WTC11 (cell line): ENCODE measurements at regions of chr14 and their contacts with region 1.

Region 1: GRCh38 chr14:22052795-22053194 is 379.2 kb upstream of the OR4E1 start:
- DNase-seq: no peak
- ATAC-seq: peak; percentile 30; the same call in 1 of the 2 replicates
- H3K4me3 Mint-ChIP-seq: no peak overlapping the region
- H3K27ac Mint-ChIP-seq: no peak overlapping the region
- H3K4me1 Mint-ChIP-seq: peaks cover 4% of the 10 kb centered on the region
- H3K27me3 Mint-ChIP-seq: peaks cover 3% of the 10 kb centered on the region; the same call in 1 of the 2 replicates
- CTCF ChIP-seq: no peak

Region 2: GRCh38 chr14:21965042-21965441 is 87.8 kb before region 1 on chr14:
- CTCF ChIA-PET with region 1: no interaction called
- POLR2A ChIA-PET with region 1: no interaction called
- DNase-seq: no peak
- ATAC-seq: no peak
- H3K4me3 Mint-ChIP-seq: no peak overlapping the region
- H3K27ac Mint-ChIP-seq: no peak overlapping the region
- H3K4me1 Mint-ChIP-seq: no peaks in the 10 kb centered on the region
- H3K27me3 Mint-ChIP-seq: peaks cover 22% of the 10 kb centered on the region
- CTCF ChIP-seq: no peak

Region 3: DNA sequence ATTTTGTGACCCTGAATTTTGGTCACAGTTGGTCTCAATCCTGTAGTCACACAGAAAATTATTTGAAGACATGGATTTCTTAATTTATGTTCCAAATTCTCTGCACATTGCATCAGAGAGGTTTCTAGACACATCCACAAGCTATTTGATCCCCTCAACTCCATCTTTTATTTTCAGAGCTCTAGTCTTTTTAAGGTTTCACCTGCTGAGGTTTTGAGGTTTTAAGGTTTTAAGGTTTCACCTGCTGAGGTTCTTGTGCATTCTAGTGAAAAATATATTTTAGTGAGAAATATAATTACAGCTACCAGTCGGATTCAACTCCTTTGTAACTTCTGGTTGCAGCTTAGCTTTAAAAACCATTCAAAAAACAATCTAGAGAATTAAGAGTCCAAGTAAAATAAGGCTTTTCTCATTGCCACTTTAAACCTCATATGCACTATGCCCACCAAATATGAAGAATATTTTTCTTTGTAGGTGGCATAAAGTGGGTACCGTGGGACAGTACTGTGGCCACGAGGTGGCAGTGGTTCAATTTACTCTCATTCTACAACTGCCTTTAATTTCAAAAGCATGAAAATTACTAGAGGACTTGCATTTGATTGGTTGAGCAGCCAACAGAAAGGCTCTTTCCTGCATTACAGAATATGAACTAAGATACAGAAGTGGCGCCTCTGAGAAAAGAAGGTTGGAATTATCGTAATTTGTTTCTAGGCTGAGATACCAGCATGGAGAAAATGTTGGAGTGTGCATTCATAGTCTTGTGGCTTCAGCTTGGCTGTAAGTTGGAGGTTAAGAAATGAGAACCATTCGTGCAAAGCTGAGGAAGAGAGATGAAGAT is 12.6 kb before region 1 on chr14:
- CTCF ChIA-PET with region 1: interaction called, 15 read pairs
- POLR2A ChIA-PET with region 1: interaction called, 3 read pairs
- DNase-seq: no peak
- ATAC-seq: peak; percentile 41; the same call in 1 of the 2 replicates
- H3K4me3 Mint-ChIP-seq: no peak overlapping the region
- H3K27ac Mint-ChIP-seq: no peak overlapping the region
- H3K4me1 Mint-ChIP-seq: no peaks in the 10 kb centered on the region
- H3K27me3 Mint-ChIP-seq: no peaks in the 10 kb centered on the region; the same call in 1 of the 2 replicates
- CTCF ChIP-seq: no peak